Dendritic cell treated with granulocyte-macrophage colony-stimulating factor and Interleukin-4, amounts not matched to agents 40 ng/mL and 50 ng/mL, for 4 days (primary cell): ENCODE measurements at regions of chr11 and their contacts with region 1.

Region 1: GRCh38 chr11:108253176-108253575 is 30.3 kb downstream of the ATM start:
- H3K4me3 Mint-ChIP-seq: no peak overlapping the region
- H3K27ac Mint-ChIP-seq: no peak overlapping the region
- H3K4me1 Mint-ChIP-seq: no peaks in the 10 kb centered on the region
- H3K27me3 Mint-ChIP-seq: no peaks in the 10 kb centered on the region

Region 2: DNA sequence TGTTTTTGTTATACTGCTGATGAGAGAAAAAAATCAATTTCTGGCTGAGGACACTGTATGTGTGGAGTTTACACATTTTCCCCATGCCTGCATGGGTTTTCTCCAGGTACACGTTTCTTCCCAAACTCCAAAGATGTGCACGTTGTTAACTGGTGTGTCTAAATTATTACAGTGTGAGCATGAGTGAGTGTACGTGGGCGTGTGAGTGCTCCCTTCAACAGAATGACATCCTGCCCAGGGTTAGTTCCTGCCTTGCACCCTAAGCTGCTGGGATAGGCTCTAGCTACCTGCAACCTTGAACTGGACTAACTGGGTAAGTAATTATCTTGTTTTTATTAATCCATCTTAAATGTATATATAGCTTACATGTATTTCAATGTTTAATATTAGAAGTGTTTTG is 36.2 kb before region 1 on chr11:
- intact Hi-C with region 1: no loop called
- H3K4me3 Mint-ChIP-seq: no peak overlapping the region
- H3K27ac Mint-ChIP-seq: no peak overlapping the region
- H3K4me1 Mint-ChIP-seq: peaks cover 46% of the 10 kb centered on the region
- H3K27me3 Mint-ChIP-seq: no peaks in the 10 kb centered on the region

Region 3: DNA sequence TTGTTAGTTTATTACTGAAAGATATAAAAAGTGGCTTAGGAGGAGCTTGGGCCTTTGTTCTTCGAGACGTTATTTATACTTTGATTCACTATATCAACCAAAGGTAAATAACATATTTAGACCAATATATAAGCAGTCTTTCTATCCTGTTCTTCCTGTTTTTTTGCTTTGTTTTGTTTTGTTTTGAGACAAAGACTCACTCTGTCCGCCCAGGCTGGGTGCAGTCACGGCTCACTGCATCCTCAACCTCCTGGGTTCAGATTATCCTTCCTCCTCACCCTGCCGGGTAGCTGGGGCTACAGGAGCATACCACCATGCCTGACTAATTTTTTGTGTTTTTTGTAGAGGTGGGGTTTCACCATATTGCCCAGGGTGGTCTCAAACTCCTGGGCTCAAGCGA is 36.5 kb after region 1 on chr11:
- intact Hi-C with region 1: loop called (anchors 5 kb)
- H3K4me3 Mint-ChIP-seq: no peak overlapping the region
- H3K27ac Mint-ChIP-seq: no peak overlapping the region
- H3K4me1 Mint-ChIP-seq: no peaks in the 10 kb centered on the region
- H3K27me3 Mint-ChIP-seq: no peaks in the 10 kb centered on the region